HepG2 (cell line): ENCODE measurements at regions of chr13 and their contacts with region 1.

Region 1: GRCh38 chr13:75549262-75550158 is at the start of gene UCHL3:
- DNase-seq: peak; percentile 93
- ATAC-seq: peak; percentile 96
- H3K4me3 ChIP-seq: peak within 1 kb of the TSS; percentile 77 to 99 (median 94)
- H3K27ac ChIP-seq: peak within 1 kb of the TSS; percentile 88
- H3K4me1 ChIP-seq: peaks cover 44% of the 10 kb centered on the region
- H3K27me3 ChIP-seq: no peaks in the 10 kb centered on the region; a peak in 1 of 5 replicates
- CTCF ChIP-seq: peak; percentile 99
- EP300 ChIP-seq: 0 out of 4 replicates have a peak, but pooled peaks of 1 of the 2 experiments have one; percentile 19
- POLR2A ChIP-seq: peak; percentile 51 to 82
- RAD21 ChIP-seq: peak; percentile 96
- total RNA-seq, gene UCHL3: 93.3 and 123 TPM in 2 replicates

Region 2: GRCh38 chr13:75299913-75300862 is 249.3 kb before region 1 on chr13:
- CTCF ChIA-PET with region 1: no interaction called
- POLR2A ChIA-PET with region 1: no interaction called
- in situ Hi-C with region 1: no loop called
- intact Hi-C with region 1: loop called (anchors 5 kb)
- DNase-seq: no peak
- ATAC-seq: no peak
- H3K4me3 ChIP-seq: no peak overlapping the region
- H3K27ac ChIP-seq: no peak overlapping the region
- H3K4me1 ChIP-seq: peaks cover 26% of the 10 kb centered on the region
- H3K27me3 ChIP-seq: no peaks in the 10 kb centered on the region
- CTCF ChIP-seq: no peak
- EP300 ChIP-seq: no peak
- POLR2A ChIP-seq: no peak
- RAD21 ChIP-seq: no peak

Region 3: GRCh38 chr13:75326173-75327134 is 223.1 kb before region 1 on chr13:
- CTCF ChIA-PET with region 1: no interaction called
- POLR2A ChIA-PET with region 1: no interaction called
- in situ Hi-C with region 1: no loop called
- intact Hi-C with region 1: no loop called
- DNase-seq: no peak
- ATAC-seq: no peak; the same call in 2 of the 3 replicates
- H3K4me3 ChIP-seq: no peak overlapping the region
- H3K27ac ChIP-seq: no peak overlapping the region
- H3K4me1 ChIP-seq: peaks cover 35% of the 10 kb centered on the region
- H3K27me3 ChIP-seq: no peaks in the 10 kb centered on the region
- CTCF ChIP-seq: no peak
- EP300 ChIP-seq: no peak
- POLR2A ChIP-seq: no peak
- RAD21 ChIP-seq: no peak

Region 4: DNA sequence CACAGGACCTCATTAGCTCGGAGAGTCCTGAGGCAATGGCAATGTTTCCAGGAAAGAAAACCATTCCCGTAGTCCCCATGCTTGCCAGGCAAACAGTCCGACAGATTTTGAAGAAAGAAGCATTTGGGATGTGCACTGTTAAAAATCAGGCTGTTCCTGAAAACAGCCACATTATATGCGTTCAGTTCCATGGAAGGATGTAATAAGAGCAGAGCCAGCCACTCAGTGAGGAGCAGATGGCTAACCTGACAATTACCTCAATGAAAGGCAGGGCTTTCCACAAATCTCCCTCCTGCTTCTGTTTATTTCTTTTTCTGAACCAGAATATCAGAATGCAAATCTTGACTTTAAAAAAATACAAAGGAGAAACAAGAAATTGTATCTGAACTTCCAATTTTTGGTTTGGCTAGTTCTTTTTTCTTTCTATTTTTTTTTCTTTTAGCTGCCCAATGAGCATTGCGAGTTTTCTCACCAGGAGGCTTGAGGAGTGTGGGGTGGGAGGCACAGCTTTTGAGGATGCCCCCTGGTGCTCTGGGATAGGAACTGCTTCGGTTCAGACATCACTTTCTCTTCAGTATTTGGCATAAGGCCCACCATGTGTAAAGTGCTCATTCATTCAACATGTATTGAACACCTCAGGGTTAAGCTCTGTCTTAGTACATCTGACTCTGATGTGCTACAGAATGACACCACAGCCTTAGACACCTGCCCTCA is 191.8 kb before region 1 on chr13:
- CTCF ChIA-PET with region 1: no interaction called
- POLR2A ChIA-PET with region 1: no interaction called
- in situ Hi-C with region 1: no loop called
- intact Hi-C with region 1: loop called (anchors 5 kb)
- DNase-seq: peak; percentile 69
- ATAC-seq: peak; percentile 94
- H3K4me3 ChIP-seq: no peak overlapping the region
- H3K27ac ChIP-seq: no peak overlapping the region
- H3K4me1 ChIP-seq: peaks cover 13% of the 10 kb centered on the region
- H3K27me3 ChIP-seq: no peaks in the 10 kb centered on the region
- CTCF ChIP-seq: peak; percentile 67
- EP300 ChIP-seq: no peak
- POLR2A ChIP-seq: no peak
- RAD21 ChIP-seq: peak; percentile 18; the same call in 1 of the 2 replicates

Region 5: DNA sequence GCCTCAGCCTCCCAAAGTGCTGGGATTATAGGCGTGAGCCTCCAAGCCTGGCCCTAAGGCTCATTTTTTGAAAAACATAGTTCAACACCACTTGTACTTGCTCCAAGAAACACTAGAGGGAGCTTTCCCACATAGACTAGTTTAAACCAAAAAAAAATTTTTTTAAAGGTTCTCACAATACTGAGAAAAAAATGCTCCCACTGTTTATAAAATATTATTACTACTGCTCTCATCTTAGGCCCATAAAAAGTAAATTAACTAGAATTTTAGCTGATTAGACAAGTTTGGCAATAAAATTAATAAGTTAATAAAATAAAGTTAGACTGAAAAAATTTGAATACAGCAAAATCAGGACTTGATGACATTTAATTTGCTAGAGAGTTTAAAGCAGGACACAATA is 177.0 kb before region 1 on chr13:
- CTCF ChIA-PET with region 1: interaction called, 14 read pairs
- POLR2A ChIA-PET with region 1: interaction called, 3 read pairs
- in situ Hi-C with region 1: loop called (anchors 10 kb)
- intact Hi-C with region 1: loop called (anchors 1 kb)
- DNase-seq: peak; percentile 44
- ATAC-seq: 0 out of 3 replicates have a peak, but pooled peaks have one; percentile 28
- H3K4me3 ChIP-seq: no peak overlapping the region
- H3K27ac ChIP-seq: peak overlapping the region; percentile 21
- H3K4me1 ChIP-seq: peaks cover 83% of the 10 kb centered on the region
- H3K27me3 ChIP-seq: no peaks in the 10 kb centered on the region
- CTCF ChIP-seq: peak; percentile 60
- EP300 ChIP-seq: no peak
- POLR2A ChIP-seq: no peak
- RAD21 ChIP-seq: 0 out of 2 replicates have a peak, but pooled peaks have one; percentile 29

Region 6: DNA sequence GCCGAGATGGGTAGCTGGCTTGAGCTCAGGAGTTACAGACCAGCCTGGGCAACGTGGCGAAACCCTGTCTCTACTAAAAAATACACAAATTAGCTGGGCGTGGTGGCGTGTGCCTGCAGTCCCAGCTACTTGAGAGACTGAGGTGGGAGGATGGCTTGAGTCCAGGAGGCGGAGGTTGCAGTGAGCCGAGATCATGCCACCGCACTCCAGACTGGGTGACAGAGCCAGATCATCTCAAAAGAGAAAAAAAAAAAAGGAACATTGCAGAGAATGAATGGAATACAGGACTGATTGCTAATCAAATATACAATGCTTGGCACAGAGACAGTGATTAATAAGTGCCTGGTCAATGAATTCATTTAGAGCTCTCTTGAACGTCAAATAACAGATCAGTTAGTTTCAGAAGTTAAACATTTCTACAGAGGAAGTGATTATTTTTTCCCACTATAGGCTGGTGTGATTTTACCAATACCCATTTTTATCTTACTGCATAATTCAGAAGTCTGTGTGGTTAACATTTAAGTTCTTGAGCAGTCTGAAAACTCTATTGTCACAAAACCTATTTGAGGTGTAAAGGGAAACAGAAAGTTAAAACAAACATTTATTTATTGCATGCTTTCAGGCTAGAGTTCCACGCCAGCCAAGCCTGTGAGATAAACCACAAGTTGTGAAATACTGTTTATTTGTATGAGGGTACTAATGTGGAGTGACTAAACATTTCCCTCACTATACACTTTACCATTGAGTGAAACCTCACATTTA is 59.8 kb before region 1 on chr13:
- CTCF ChIA-PET with region 1: interaction called, 9 read pairs
- POLR2A ChIA-PET with region 1: no interaction called
- in situ Hi-C with region 1: loop called (anchors 5 kb)
- intact Hi-C with region 1: no loop called
- DNase-seq: peak; percentile 46
- ATAC-seq: peak; percentile 50
- H3K4me3 ChIP-seq: peak overlapping the region; percentile 9 to 52 (median 23); a peak in 2 of 6 replicates
- H3K27ac ChIP-seq: no peak overlapping the region
- H3K4me1 ChIP-seq: peaks cover 64% of the 10 kb centered on the region
- H3K27me3 ChIP-seq: no peaks in the 10 kb centered on the region
- CTCF ChIP-seq: no peak
- EP300 ChIP-seq: peak in 1 of 2 experiments; percentile 44; a peak in 2 of 4 replicates
- POLR2A ChIP-seq: no peak
- RAD21 ChIP-seq: no peak